ENCODE measurements at regions of chr10 and their contacts with region 1.

Region 1: DNA sequence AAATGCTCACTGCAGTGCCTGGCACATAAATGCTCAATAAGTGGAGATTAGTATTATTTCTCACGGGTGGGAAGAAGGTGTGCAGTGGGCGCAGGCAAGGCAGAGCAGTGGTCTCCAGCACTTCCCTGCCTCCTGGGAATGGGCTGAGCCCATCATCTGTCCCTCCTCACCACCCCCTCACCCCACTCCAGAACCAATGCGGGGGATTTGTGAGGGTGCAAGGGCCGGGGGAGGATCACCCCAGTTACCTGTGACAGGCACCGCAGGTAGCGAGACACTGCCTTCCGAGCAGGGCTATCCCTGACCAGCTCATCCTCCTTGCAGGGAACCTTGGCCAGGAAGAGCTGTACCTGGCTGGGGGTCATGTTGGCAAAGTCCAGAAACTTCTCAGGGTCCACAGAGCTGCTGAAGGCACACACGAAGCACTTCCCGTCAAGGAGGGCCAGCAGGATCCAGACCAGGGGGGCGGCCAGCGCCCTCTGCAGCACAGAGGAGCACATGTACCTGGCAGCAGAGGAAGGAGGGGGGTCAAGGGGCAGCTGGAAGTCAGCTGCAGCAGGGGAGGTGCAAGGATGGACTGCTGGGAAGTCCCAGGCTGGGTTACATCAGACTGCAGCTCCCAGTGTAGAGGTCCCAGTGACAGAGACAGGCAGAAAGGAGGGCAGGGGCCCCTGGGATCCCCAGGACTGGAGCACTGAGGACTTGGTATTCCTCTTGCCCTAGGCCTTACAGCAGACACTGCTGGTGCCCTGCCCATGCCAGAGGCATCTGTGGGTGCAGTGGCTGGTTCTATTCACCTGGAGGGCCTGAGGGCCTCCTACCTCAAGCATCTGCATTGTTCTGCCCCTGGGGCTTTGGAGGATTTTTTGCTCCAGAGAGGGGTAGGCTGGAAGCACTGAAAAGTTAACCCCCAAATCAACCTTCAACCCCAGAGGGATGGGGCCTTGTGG is 2.7 kb downstream of the CALHM3 start:
- DNase-seq: no peak
- ATAC-seq: no peak
- H3K4me3 ChIP-seq: no peak overlapping the region
- H3K27ac ChIP-seq: no peak overlapping the region
- H3K4me1 ChIP-seq: peaks cover 0 to 17% (median 0%) of the 10 kb centered on the region in 12 donors
- H3K27me3 ChIP-seq: no peaks in the 10 kb centered on the region
- CTCF ChIP-seq: no peak
- POLR2A ChIP-seq: no peak

Region 2: GRCh38 chr10:103102195-103102594 is 374.1 kb before region 1 on chr10:
- intact Hi-C with region 1: no loop called
- DNase-seq: no peak
- ATAC-seq: peak; percentile 16 to 65 (median 51)
- H3K4me3 ChIP-seq: no peak overlapping the region
- H3K27ac ChIP-seq: peak overlapping the region in 1 of 12 donors; percentile 5
- H3K4me1 ChIP-seq: peaks cover 0 to 22% (median 3%) of the 10 kb centered on the region in 12 donors
- H3K27me3 ChIP-seq: no peaks in the 10 kb centered on the region
- CTCF ChIP-seq: no peak
- POLR2A ChIP-seq: no peak

Region 3: GRCh38 chr10:103439776-103440175 is 36.5 kb before region 1 on chr10:
- intact Hi-C with region 1: loop called in 1 of 10 experiments (anchors 5 kb)
- DNase-seq: no peak
- ATAC-seq: no peak
- H3K4me3 ChIP-seq: no peak overlapping the region
- H3K27ac ChIP-seq: no peak overlapping the region
- H3K4me1 ChIP-seq: peaks cover 0 to 35% (median 25%) of the 10 kb centered on the region in 12 donors
- H3K27me3 ChIP-seq: no peaks in the 10 kb centered on the region
- CTCF ChIP-seq: no peak
- POLR2A ChIP-seq: no peak

Measured in heart left ventricle (tissue), 16 donors.